GM10248 (cell line): ENCODE measurements at regions of chr11 and their contacts with region 1.

Region 1: DNA sequence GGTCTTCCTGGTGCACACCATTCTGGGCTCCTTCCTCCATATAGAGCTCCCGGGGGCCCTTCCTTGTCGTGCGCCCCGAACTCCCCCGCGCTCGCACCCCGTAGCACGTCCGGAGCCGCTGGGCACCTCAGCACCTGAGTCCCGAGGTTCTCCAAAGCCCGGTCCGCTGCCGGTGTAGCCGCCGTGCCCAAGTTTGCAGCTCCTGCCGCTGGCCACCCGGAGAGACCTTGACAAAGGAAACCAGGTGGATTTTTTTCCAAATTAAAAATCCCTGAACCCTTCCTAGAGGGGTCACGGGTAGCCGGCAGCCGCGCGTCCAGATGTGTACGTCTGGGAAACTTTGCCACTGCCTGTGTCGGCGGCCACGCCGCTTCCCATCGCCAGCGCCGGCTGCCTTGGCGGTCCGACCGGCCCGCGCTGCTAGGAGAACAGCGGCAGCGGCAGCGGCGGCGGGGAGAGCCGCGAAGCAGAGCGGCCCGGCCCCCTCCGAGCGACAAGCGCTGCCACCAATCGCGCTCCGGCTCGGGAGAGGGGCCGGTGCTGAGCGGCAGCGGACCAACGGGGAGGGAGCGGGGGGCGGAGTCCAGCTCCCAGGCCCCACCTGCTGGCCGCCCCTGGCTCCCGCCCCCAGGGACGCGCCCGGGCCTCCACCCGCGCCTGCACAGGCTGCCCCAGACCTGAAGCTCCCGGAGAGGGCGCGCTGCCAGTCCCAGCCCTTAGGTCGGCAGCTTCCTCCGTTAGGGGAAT is at the start of gene GALNT18:
- DNase-seq: peak; percentile 99
- CTCF ChIP-seq: peak; percentile 41

Region 2: DNA sequence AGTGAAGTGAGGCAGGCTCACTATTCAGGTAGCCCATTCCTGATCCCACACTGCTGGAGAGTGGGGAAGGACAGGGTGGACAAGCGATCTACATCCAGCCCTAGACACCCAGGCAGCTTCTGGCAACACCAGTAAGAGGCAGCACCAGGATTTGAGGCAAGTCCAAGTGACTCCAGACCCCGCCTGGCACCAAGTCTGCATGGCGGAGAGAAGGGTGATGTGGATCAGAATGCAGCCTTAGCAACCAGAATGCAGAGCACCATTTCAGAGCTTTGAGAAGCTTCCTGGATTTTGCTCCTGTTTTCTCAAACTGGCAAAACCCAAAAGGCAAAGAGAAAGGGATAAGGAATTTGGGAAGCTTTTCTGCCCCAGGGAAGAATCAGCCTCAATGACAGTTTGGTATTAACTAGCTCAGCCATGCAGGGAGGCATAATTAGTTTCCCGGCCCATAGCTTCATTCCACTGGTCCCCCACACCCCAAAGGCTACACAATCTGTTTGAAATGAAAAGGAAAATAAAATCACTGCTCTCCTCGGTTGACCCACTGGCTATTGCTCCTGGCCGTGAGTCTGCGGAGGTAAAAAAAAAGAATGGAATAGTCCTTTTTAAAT is 17.3 kb before region 1 on chr11:
- CTCF ChIA-PET with region 1: interaction called, 10 read pairs
- POLR2A ChIA-PET with region 1: no interaction called
- DNase-seq: no peak
- CTCF ChIP-seq: no peak

Region 3: DNA sequence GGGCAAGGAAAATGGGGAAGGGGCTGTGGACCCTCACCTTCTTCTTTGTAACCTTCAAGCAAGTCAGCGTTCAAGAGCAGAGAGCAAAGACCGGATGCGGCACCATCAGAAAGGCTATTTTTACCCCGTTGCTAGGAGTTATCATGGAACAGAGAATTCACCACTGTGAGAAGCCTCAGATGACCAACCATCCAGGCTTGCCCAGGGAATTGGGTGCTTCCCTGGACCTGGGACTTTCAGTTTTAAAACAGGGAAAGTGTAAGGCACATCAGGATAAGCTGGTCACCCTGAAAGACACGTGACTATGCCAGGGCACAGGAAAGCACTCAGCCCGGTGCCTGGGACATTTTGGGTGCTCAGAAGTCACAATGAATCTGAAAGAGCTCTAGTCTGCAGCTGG is 10.4 kb before region 1 on chr11:
- CTCF ChIA-PET with region 1: interaction called, 14 read pairs
- POLR2A ChIA-PET with region 1: no interaction called
- DNase-seq: no peak
- CTCF ChIP-seq: no peak